ENCODE measurements at regions of chr5 and their contacts with region 1.

Region 1: GRCh38 chr5:114018186-114018585 is 343.7 kb upstream of the KCNN2 start:
- DNase-seq: no peak
- ATAC-seq: peak in 2 of 4 donors; percentile 55 to 77
- H3K4me3 ChIP-seq: no peak overlapping the region
- H3K27ac ChIP-seq: no peak overlapping the region
- H3K4me1 ChIP-seq: no peaks in the 10 kb centered on the region
- H3K27me3 ChIP-seq: peaks cover 0 to 2% (median 0%) of the 10 kb centered on the region in 3 donors
- CTCF ChIP-seq: peak; percentile 57

Region 2: DNA sequence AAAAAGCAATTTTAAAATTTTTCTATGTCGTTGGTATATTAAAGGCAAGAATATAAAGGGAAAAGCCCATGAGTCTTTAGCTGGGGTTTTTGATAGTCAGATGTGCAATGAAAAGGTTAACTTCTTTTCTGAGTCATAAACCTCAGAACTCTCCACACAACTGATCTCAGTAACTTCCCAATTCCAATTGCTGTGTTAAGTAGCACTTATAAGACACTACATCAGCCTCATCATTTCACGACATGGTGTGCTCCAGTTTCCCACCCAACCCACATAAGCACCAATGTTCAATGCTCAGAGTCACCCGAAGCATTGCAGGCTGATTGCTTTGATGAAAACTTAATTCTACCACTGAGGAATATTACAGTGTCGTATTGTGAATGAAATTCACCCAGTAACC is 739.2 kb before region 1 on chr5:
- intact Hi-C with region 1: no loop called
- DNase-seq: no peak
- ATAC-seq: no peak
- H3K4me3 ChIP-seq: no peak overlapping the region
- H3K27ac ChIP-seq: no peak overlapping the region
- H3K4me1 ChIP-seq: peaks cover 10% of the 10 kb centered on the region
- H3K27me3 ChIP-seq: no peaks in the 10 kb centered on the region
- CTCF ChIP-seq: no peak

Region 3: GRCh38 chr5:113974976-113975375 is 43.2 kb before region 1 on chr5:
- intact Hi-C with region 1: loop called in 1 of 2 experiments (anchors 1 kb)
- DNase-seq: no peak
- ATAC-seq: no peak
- H3K4me3 ChIP-seq: no peak overlapping the region
- H3K27ac ChIP-seq: no peak overlapping the region
- H3K4me1 ChIP-seq: no peaks in the 10 kb centered on the region
- H3K27me3 ChIP-seq: no peaks in the 10 kb centered on the region
- CTCF ChIP-seq: no peak

Region 4: GRCh38 chr5:114305402-114306211 is 287.4 kb after region 1 on chr5:
- intact Hi-C with region 1: loop called in 1 of 2 experiments (anchors 10 kb)
- DNase-seq: no peak
- ATAC-seq: no peak
- H3K4me3 ChIP-seq: no peak overlapping the region
- H3K27ac ChIP-seq: no peak overlapping the region
- H3K4me1 ChIP-seq: no peaks in the 10 kb centered on the region
- H3K27me3 ChIP-seq: no peaks in the 10 kb centered on the region
- CTCF ChIP-seq: peak; percentile 23

Measured in psoas muscle (tissue), 8 donors.